ENCODE measurements at regions of chr13 and their contacts with region 1.

Region 1: DNA sequence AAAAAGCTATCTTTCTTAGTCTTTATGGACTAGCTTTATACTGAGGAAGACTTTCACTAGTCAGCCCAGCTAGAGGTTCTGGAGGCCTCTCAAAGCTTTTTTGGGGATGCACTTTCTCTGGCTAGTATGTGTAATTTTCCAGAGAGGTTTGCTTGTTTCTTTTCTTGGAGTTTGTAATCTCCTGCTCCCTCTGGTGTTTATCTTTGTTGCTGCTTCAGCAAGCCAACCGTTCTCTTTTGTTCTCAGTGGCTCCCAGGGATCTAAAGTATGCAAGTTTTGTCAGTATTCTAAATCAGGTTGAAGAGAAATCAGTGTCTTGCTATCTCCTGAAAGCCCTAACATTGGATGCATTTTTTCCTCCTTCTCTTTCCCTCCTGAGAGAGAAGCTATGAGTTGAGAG is 121.1 kb upstream of the MYO16 start:
- DNase-seq: no peak
- ATAC-seq: no peak
- H3K4me3 ChIP-seq: no peak overlapping the region
- H3K27ac ChIP-seq: no peak overlapping the region
- H3K4me1 ChIP-seq: no peaks in the 10 kb centered on the region
- H3K27me3 ChIP-seq: no peaks in the 10 kb centered on the region
- CTCF ChIP-seq: peak; percentile 14

Region 2: DNA sequence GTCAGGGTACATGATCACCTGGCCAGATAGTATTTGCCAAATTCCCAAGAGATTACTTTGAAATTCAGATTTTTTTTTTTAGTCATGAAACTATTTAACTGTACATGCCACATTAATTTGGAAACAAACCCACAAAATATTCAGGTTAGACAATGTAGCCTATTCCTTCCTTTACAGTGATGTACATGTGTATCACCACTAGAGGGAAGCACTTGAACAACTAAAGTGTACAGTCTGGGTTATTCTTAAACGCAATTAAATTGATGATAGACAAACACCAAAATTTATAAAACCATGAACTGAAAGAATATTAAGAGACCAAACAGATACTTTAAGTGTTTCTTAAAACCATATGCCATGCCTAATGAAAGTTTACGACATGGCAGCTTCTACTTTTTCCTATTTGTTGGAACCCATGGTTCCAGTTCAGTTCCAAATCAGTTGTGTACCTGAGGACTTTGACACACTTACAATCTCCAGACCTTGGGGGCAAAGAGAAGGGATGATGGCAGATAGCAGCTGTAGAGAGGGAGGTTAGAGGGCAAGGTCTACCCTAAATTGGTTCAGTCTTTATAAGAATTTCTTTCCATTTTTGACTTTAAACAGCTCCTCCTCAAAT is 185.9 kb before region 1 on chr13:
- intact Hi-C with region 1: loop called in 1 of 2 experiments (anchors 10 kb)
- DNase-seq: no peak
- ATAC-seq: peak in 2 of 4 donors; percentile 53 to 65
- H3K4me3 ChIP-seq: no peak overlapping the region
- H3K27ac ChIP-seq: no peak overlapping the region
- H3K4me1 ChIP-seq: no peaks in the 10 kb centered on the region
- H3K27me3 ChIP-seq: no peaks in the 10 kb centered on the region
- CTCF ChIP-seq: peak; percentile 73

Measured in psoas muscle (tissue), 8 donors.